ENCODE measurements at regions of chr21 and their contacts with region 1.

Region 1: GRCh38 chr21:25881525-25882376 is 147.0 kb downstream of the GABPA start:
- DNase-seq: peak; percentile 26
- H3K4me3 ChIP-seq: no peak overlapping the region
- H3K27ac ChIP-seq: no peak overlapping the region
- H3K4me1 ChIP-seq: no peaks in the 10 kb centered on the region
- H3K27me3 ChIP-seq: no peaks in the 10 kb centered on the region
- CTCF ChIP-seq: peak; percentile 82 to 88

Region 2: GRCh38 chr21:26715878-26716506 is 834.2 kb after region 1 on chr21:
- CTCF ChIA-PET with region 1: no interaction called
- dilution Hi-C with region 1: no loop called
- in situ Hi-C with region 1: loop called in 1 of 2 experiments (anchors 25 kb)
- intact Hi-C with region 1: loop called (anchors 1 kb)
- DNase-seq: peak; percentile 42
- H3K4me3 ChIP-seq: peak overlapping the region in 1 of 3 experiments; percentile 23
- H3K27ac ChIP-seq: no peak overlapping the region
- H3K4me1 ChIP-seq: peaks cover 4% of the 10 kb centered on the region
- H3K27me3 ChIP-seq: no peaks in the 10 kb centered on the region
- CTCF ChIP-seq: peak; percentile 85 to 86

Measured in mammary epithelial cell (primary cell).